ENCODE measurements at regions of chr17 and their contacts with region 1.

Region 1: GRCh38 chr17:40536295-40537171 is 28.7 kb downstream of the CCR7 start:
- DNase-seq: no peak
- CTCF ChIP-seq: no peak

Region 2: GRCh38 chr17:39963829-39964228 is 572.7 kb before region 1 on chr17:
- CTCF ChIA-PET with region 1: no interaction called
- POLR2A ChIA-PET with region 1: no interaction called
- DNase-seq: no peak
- CTCF ChIP-seq: no peak

Region 3: DNA sequence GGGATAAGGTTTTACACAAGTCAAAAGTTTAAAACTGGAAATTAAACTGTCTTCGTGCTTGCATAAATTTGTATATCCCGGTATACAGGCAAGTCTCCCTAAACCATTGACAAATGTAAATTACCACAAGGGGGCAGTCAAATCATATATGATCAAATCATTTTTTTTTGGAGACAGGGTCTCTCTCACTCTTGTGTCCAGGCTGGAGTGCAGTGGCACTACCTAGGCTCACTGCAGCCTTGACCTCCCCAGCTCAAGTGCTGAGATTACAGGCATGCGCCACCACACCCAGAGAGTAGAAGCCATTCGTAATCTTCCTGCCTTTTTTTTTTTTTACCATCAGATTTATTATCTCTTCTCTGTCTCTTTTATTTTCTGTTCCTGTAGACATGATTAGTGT is 137.3 kb before region 1 on chr17:
- CTCF ChIA-PET with region 1: interaction called, 35 read pairs
- POLR2A ChIA-PET with region 1: no interaction called
- DNase-seq: peak; percentile 31
- CTCF ChIP-seq: peak; percentile 38

Region 4: DNA sequence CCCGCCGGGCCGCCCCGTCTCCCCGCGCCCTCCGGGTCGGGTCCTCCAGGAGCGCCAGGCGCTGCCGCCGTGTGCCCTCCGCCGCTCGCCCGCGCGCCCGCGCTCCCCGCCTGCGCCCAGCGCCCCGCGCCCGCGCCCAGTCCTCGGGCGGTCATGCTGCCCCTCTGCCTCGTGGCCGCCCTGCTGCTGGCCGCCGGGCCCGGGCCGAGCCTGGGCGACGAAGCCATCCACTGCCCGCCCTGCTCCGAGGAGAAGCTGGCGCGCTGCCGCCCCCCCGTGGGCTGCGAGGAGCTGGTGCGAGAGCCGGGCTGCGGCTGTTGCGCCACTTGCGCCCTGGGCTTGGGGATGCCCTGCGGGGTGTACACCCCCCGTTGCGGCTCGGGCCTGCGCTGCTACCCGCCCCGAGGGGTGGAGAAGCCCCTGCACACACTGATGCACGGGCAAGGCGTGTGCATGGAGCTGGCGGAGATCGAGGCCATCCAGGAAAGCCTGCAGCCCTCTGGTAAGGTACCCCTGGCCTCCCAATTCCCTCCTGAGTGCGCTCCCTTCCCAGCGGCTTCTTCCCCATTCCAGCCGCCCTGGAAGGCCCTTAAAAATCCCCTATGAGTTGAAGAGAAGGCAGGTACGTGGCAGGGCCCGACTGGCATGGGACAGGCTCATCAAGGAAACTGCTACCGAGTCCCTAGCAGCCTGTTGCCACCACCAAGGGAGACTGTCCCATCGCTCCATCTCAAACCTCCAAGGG is 92.8 kb before region 1 on chr17:
- CTCF ChIA-PET with region 1: interaction called, 113 read pairs
- POLR2A ChIA-PET with region 1: no interaction called
- DNase-seq: peak; percentile 81
- CTCF ChIP-seq: peak; percentile 82

Region 5: GRCh38 chr17:40602775-40603551 is 66.4 kb after region 1 on chr17:
- CTCF ChIA-PET with region 1: no interaction called
- POLR2A ChIA-PET with region 1: no interaction called
- DNase-seq: peak; percentile 70
- CTCF ChIP-seq: no peak